OCI-LY7 (cell line): ENCODE measurements at regions of chr11 and their contacts with region 1.

Region 1: GRCh38 chr11:107293677-107294344 is 163.8 kb downstream of the CWF19L2 start:
- DNase-seq: no peak
- H3K4me3 ChIP-seq: no peak overlapping the region
- H3K27ac ChIP-seq: no peak overlapping the region
- H3K4me1 ChIP-seq: no peaks in the 10 kb centered on the region
- CTCF ChIP-seq: no peak

Region 2: DNA sequence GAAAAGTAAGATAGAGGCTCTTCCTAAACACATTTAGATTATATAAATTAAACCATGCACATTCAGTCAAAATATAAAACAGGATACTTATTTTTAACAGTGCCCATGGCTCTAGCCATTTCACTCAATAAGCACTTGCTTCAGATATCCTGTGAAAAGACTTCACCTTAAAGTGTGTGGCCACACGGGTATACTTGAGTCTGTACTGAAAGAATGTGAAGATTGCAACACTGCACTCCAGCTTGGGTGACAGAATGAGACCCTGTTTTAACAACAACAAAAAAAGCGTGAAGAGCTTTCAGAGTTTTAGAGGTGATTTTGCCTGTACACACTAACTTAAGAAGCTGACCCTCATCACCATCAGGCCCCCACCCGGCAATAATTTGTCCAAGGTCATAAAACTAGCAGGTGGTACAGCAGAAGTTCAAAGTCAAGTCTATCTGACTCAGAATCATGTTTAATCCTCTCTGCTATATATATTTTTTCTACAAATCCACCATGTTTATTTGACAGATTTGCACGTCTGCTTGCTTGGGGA is 72.0 kb before region 1 on chr11:
- CTCF ChIA-PET with region 1: no interaction called
- POLR2A ChIA-PET with region 1: no interaction called
- intact Hi-C with region 1: no loop called
- DNase-seq: no peak
- H3K4me3 ChIP-seq: no peak overlapping the region
- H3K27ac ChIP-seq: no peak overlapping the region
- H3K4me1 ChIP-seq: no peaks in the 10 kb centered on the region
- CTCF ChIP-seq: no peak

Region 3: DNA sequence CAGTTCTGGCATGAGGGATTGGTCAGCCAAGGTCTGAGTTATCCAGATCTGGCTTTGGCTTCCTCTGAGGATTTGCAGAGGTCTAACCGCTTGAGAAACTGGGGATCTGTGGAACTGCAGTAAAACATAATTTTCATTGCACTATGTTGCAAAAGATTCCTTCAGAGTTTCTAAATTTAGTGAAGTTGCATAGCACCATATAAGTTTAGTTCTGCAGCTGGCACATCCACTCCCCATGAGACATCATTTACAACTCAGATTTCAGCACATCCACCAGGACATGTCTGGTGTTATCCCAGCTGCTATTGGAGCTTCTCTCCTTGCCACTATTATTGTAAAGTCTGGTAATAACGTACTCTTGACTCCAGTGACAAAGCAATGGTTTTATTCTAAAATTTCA is 17.7 kb before region 1 on chr11:
- CTCF ChIA-PET with region 1: no interaction called
- POLR2A ChIA-PET with region 1: interaction called, 6 read pairs
- intact Hi-C with region 1: loop called (anchors 1 kb)
- DNase-seq: no peak
- H3K4me3 ChIP-seq: no peak overlapping the region
- H3K27ac ChIP-seq: no peak overlapping the region
- H3K4me1 ChIP-seq: no peaks in the 10 kb centered on the region
- CTCF ChIP-seq: no peak